IMR-90 (cell line): ENCODE measurements at regions of chr1 and their contacts with region 1.

Region 1: GRCh38 chr1:9004700-9005394 is 21.4 kb downstream of the SLC2A7 start:
- DNase-seq: peak; percentile 87
- ATAC-seq: peak; percentile 100
- H3K4me3 ChIP-seq: no peak overlapping the region
- H3K27ac ChIP-seq: no peak overlapping the region
- H3K4me1 ChIP-seq: no peaks in the 10 kb centered on the region; the same call in 1 of the 2 replicates
- H3K27me3 ChIP-seq: peaks cover 12% of the 10 kb centered on the region; the same call in 1 of the 2 replicates
- CTCF ChIP-seq: peak; percentile 96
- POLR2A ChIP-seq: peak; percentile 22; the same call in 1 of the 2 replicates
- RAD21 ChIP-seq: peak; percentile 85

Region 2: GRCh38 chr1:8862528-8862927 is 142.3 kb before region 1 on chr1:
- CTCF ChIA-PET with region 1: no interaction called
- POLR2A ChIA-PET with region 1: no interaction called
- dilution Hi-C with region 1: no loop called
- in situ Hi-C with region 1: no loop called
- intact Hi-C with region 1: no loop called
- DNase-seq: no peak
- ATAC-seq: peak; percentile 22; the same call in 1 of the 2 replicates
- H3K4me3 ChIP-seq: no peak overlapping the region
- H3K27ac ChIP-seq: no peak overlapping the region
- H3K4me1 ChIP-seq: peaks cover 10% of the 10 kb centered on the region
- H3K27me3 ChIP-seq: no peaks in the 10 kb centered on the region
- CTCF ChIP-seq: peak; percentile 51
- POLR2A ChIP-seq: no peak
- RAD21 ChIP-seq: no peak

Region 3: DNA sequence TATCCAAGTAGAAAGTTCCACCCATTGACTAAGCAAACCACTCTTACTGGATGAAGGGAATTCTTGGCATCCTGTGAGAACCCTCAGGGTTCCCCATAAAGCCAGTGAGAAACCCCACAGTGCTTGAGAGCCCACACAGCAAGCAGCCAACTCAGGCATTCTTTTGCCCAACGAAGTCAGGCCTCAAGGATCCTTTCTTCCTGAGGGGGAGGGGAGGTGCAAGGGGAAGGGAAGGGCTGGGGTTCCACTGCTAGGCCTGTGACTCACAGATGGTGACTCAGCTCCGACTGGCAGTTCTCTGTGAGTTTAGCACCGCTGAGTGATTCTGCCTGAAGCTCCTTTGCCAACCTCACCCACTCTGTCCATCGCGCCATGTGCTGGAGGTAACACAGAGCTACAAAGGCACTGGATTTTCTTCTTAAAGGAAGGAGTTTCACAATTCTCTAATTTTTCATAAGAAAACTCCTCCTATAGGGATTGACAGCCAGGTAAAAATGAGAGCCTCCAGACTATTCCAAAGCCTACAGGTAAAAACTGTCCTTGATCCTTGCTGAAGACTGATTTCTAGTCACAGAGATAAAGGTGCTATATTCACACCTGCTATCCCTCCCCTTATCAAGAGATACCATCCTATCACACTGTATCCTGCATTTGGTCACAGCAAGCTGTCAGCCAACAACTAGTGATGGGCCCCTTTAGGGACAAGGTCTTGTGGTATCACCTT is 131.2 kb before region 1 on chr1:
- CTCF ChIA-PET with region 1: interaction called, 4 read pairs
- POLR2A ChIA-PET with region 1: no interaction called
- dilution Hi-C with region 1: no loop called
- in situ Hi-C with region 1: no loop called
- intact Hi-C with region 1: loop called (anchors 5 kb)
- DNase-seq: peak; percentile 98
- ATAC-seq: peak; percentile 66
- H3K4me3 ChIP-seq: no peak overlapping the region
- H3K27ac ChIP-seq: peak overlapping the region; percentile 41
- H3K4me1 ChIP-seq: peaks cover 42% of the 10 kb centered on the region
- H3K27me3 ChIP-seq: no peaks in the 10 kb centered on the region
- CTCF ChIP-seq: no peak
- POLR2A ChIP-seq: peak; percentile 73
- RAD21 ChIP-seq: no peak

Region 4: DNA sequence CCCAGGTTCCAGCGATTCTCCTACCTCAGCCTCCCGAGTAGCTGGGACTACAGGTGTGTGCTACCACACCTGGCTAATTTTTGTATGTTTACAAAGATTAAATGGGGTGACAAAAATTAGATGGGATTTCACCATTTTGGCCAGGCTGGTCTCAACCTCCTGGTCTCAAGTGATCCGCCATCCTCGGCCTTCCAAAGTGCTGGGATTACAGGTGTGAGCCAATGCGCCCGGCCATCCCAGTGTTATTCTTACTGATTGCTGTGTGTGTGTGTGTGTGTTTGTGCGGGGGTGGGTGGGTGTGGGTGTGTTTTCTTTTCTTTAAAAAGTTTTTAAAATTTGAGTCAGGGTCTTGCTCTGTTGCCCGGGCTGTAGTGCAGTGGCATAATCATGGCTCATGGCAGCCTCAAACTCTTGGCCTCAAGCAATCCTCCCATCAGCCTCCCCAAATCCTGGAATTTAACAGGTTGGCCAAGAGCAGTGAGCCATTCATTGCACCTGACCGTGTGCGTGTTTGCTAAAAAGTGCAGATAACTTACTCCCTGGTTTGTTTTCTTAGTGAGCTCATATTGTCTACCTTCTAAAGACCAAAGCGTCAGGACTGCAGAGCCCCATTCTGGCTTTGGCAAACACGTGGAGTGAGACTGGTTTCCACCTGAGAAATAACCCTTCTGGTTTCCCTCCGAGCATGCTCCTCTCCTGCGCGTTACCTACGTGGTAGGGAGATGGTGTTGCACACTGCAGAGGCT is 91.6 kb before region 1 on chr1:
- CTCF ChIA-PET with region 1: interaction called, 21 read pairs
- POLR2A ChIA-PET with region 1: no interaction called
- dilution Hi-C with region 1: no loop called
- in situ Hi-C with region 1: no loop called
- intact Hi-C with region 1: loop called (anchors 1 kb)
- DNase-seq: no peak
- ATAC-seq: no peak
- H3K4me3 ChIP-seq: no peak overlapping the region
- H3K27ac ChIP-seq: no peak overlapping the region
- H3K4me1 ChIP-seq: no peaks in the 10 kb centered on the region
- H3K27me3 ChIP-seq: peaks cover 2% of the 10 kb centered on the region; the same call in 1 of the 2 replicates
- CTCF ChIP-seq: no peak
- POLR2A ChIP-seq: no peak
- RAD21 ChIP-seq: no peak

Region 5: DNA sequence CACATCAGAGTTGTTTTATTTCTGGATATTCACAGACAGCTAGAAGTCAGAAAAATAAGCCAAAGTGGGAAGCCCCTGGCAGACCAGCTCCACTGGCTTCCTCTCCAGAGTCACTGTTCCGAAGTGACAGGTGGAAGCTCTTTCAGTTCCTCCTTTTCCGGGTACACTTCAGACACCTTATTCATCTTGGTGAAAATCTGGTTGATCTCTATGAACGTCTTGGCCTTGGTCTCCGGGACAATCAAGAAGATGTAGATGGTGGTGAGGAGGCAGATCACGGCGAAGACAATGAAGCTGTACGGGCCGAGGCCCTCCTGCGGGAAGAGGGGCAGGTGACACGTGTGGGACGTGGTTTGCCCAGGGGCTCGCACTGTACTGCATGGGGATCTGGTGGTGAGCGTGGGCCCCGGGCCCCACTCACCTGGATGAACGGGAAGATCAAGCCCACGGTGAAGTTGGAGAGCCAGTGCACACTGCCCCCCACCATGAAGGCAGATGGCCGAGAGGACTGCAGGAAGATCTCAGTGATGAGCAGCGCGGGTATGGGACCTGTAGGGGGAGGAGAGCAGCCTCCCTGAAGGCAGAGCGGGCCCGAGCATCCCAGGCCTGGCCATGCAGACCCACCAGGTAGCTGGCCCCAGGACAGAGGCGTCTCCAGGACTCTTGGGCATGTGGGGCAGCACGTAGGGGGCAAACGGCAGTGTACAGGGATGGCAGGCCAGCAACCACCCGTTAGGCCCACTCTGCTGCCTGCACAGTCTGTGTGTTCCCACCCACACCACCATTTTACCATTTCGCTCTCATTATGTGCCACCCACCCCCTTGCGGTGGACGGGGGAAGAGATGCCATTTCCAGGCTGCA is 32.9 kb after region 1 on chr1:
- CTCF ChIA-PET with region 1: interaction called, 3 read pairs
- POLR2A ChIA-PET with region 1: interaction called, 12 read pairs
- dilution Hi-C with region 1: no loop called
- in situ Hi-C with region 1: no loop called
- intact Hi-C with region 1: no loop called
- DNase-seq: no peak
- ATAC-seq: no peak
- H3K4me3 ChIP-seq: no peak overlapping the region
- H3K27ac ChIP-seq: no peak overlapping the region
- H3K4me1 ChIP-seq: no peaks in the 10 kb centered on the region
- H3K27me3 ChIP-seq: peaks cover 50% of the 10 kb centered on the region
- CTCF ChIP-seq: no peak
- POLR2A ChIP-seq: no peak
- RAD21 ChIP-seq: no peak

Region 6: DNA sequence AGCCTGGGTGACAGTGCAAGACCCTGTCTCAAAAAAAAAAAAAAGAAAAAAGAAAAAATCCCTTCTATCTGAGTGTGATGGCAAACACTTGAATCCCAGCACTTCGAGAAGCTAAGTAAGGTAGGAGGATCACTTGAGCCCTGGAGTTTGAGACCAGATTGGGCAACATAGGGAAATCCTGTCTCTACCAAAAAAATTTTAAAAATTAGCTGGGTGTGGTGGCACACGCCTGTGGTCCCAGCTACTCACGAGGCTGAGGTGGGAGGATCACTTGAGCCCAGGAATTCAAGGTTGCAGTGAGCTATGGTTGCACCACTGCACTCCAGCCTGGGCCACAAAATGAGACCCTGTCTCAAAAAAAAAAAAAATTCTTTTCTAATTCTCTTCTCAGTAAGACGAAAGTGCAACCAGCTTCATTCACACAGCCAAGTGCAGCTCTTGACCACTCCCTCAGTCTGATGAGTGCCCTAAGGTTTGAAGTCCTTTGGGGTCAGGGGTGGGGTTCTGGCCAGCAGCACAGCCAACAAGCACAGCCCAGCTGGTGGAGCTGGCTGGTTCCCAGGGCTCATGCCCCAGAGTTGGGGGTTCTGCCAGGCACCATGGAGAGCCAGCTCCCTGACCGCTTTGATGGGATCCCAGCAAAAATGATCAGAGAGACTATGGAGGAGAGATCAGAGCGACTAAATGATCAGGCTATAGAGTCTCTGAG is 56.6 kb after region 1 on chr1:
- CTCF ChIA-PET with region 1: no interaction called
- POLR2A ChIA-PET with region 1: no interaction called
- dilution Hi-C with region 1: no loop called
- in situ Hi-C with region 1: no loop called
- intact Hi-C with region 1: no loop called
- DNase-seq: no peak
- ATAC-seq: no peak
- H3K4me3 ChIP-seq: no peak overlapping the region
- H3K27ac ChIP-seq: no peak overlapping the region
- H3K4me1 ChIP-seq: peaks cover 9% of the 10 kb centered on the region
- H3K27me3 ChIP-seq: no peaks in the 10 kb centered on the region
- CTCF ChIP-seq: no peak
- POLR2A ChIP-seq: no peak
- RAD21 ChIP-seq: no peak

Region 7: GRCh38 chr1:9101510-9102146 is 96.8 kb after region 1 on chr1:
- CTCF ChIA-PET with region 1: interaction called, 22 read pairs
- POLR2A ChIA-PET with region 1: no interaction called
- dilution Hi-C with region 1: no loop called
- in situ Hi-C with region 1: loop called (anchors 5 kb)
- intact Hi-C with region 1: loop called (anchors 1 kb)
- DNase-seq: peak; percentile 68
- ATAC-seq: peak; percentile 81
- H3K4me3 ChIP-seq: no peak overlapping the region
- H3K27ac ChIP-seq: no peak overlapping the region
- H3K4me1 ChIP-seq: peaks cover 3% of the 10 kb centered on the region
- H3K27me3 ChIP-seq: no peaks in the 10 kb centered on the region
- CTCF ChIP-seq: peak; percentile 81
- POLR2A ChIP-seq: no peak
- RAD21 ChIP-seq: peak; percentile 82

Region 8: DNA sequence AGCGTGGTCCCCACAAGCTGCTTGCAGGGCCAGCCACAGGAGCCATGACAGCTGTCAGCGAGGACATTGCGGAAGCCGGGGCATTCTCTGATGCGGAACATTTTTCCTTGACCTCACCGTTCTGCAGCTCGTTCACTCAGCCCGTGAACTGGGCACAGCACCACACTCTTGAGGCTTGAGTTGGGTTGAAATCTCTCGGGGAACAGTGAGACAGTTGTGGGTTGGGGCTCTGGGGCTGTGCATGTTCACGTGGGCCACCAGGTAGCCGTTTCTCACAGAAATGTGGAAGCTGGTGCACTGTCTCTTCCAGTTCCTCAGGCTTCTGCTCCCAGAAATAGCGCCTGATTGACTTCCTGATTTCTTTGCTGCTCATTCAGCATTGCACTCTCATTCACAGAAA is 357.6 kb after region 1 on chr1:
- CTCF ChIA-PET with region 1: no interaction called
- POLR2A ChIA-PET with region 1: no interaction called
- dilution Hi-C with region 1: no loop called
- in situ Hi-C with region 1: no loop called
- intact Hi-C with region 1: no loop called
- DNase-seq: no peak
- ATAC-seq: no peak
- H3K4me3 ChIP-seq: no peak overlapping the region
- H3K27ac ChIP-seq: no peak overlapping the region
- H3K4me1 ChIP-seq: peaks cover 5% of the 10 kb centered on the region; the same call in 1 of the 2 replicates
- H3K27me3 ChIP-seq: no peaks in the 10 kb centered on the region
- CTCF ChIP-seq: no peak
- POLR2A ChIP-seq: no peak
- RAD21 ChIP-seq: no peak